Astrocyte of the spinal cord (primary cell): ENCODE measurements at regions of chr1 and their contacts with region 1.

Region 1: DNA sequence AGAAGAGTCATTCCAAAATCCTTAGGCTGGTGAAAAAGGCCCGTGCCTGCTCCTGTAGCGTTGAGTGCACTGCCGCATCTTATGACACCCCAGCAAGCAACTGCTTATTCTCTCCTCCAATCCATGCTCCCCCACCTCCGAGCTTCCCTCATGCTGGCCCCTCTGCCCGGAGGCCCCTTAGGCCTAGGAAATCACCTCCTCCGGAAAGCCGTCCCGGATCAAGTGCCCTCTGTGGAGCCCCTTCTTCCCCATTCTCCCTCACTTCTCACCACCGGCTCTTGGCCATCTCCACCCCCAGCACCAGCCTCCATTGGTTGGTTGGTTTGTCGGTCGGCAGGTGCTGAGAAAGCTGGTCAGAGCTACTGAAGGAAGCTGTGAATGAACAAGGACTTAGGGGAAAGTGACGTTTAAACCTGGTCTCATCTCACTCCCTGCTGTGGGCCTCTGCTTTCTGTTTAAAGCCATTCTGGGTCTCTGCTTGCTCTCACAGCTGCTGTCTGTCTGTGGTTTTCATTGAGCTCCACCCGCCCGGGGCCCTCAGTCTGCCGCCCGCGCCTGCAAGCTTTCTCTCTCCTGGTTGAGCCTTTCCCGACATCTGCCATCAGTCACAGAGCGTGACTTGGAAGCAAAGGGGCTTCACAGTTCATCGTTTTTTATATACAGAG is 122.2 kb downstream of the KCNN3 start:
- DNase-seq: peak; percentile 24
- H3K4me3 ChIP-seq: no peak overlapping the region
- CTCF ChIP-seq: no peak

Region 2: DNA sequence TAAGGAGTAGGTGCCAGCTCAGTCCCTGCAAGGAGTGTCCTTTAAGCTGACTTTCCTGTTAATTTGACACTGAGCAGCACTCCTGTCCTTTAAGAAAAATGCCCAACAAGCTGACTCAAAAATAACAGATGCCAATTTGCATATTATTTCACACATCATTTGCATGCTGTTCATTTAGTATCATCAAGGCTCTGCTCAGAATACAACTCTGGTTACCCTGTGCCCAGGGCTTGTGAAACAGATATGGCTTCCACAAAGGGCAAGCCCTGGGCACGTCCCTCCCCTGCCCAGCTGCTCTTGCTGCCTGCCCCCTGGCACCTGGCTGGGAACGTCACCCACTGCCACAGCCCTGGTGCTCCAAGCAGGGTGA is 111.9 kb after region 1 on chr1:
- in situ Hi-C with region 1: loop called (anchors 10 kb)
- DNase-seq: no peak
- H3K4me3 ChIP-seq: no peak overlapping the region
- CTCF ChIP-seq: no peak

Region 3: GRCh38 chr1:154973344-154974062 is 225.6 kb after region 1 on chr1:
- in situ Hi-C with region 1: no loop called
- DNase-seq: peak; percentile 98
- H3K4me3 ChIP-seq: peak overlapping the region; percentile 71
- CTCF ChIP-seq: peak; percentile 10